OCI-LY7 (cell line): ENCODE measurements at regions of chr12 and their contacts with region 1.

Region 1: GRCh38 chr12:6890789-6891645 is 13.6 kb upstream of the LRRC23 start:
- DNase-seq: peak; percentile 98
- H3K4me3 ChIP-seq: peak overlapping the region; percentile 66
- H3K27ac ChIP-seq: peak overlapping the region; percentile 81
- H3K4me1 ChIP-seq: peaks cover 28% of the 10 kb centered on the region
- CTCF ChIP-seq: peak; percentile 82

Region 2: GRCh38 chr12:6792522-6793201 is 98.4 kb before region 1 on chr12:
- CTCF ChIA-PET with region 1: no interaction called
- POLR2A ChIA-PET with region 1: no interaction called
- intact Hi-C with region 1: no loop called
- DNase-seq: no peak
- H3K4me3 ChIP-seq: no peak overlapping the region
- H3K27ac ChIP-seq: no peak overlapping the region
- H3K4me1 ChIP-seq: peaks cover 17% of the 10 kb centered on the region
- CTCF ChIP-seq: no peak

Region 3: GRCh38 chr12:6861391-6861790 is 29.6 kb before region 1 on chr12:
- CTCF ChIA-PET with region 1: no interaction called
- POLR2A ChIA-PET with region 1: no interaction called
- intact Hi-C with region 1: no loop called
- DNase-seq: no peak
- H3K4me3 ChIP-seq: no peak overlapping the region
- H3K27ac ChIP-seq: no peak overlapping the region
- H3K4me1 ChIP-seq: peaks cover 2% of the 10 kb centered on the region
- CTCF ChIP-seq: no peak

Region 4: GRCh38 chr12:6904280-6905278 is 13.6 kb after region 1 on chr12 and contains the start of gene LRRC23:
- CTCF ChIA-PET with region 1: interaction called, 3 read pairs
- POLR2A ChIA-PET with region 1: interaction called, 13 read pairs
- intact Hi-C with region 1: no loop called
- DNase-seq: peak; percentile 95
- H3K4me3 ChIP-seq: peak within 1 kb of the TSS; percentile 81
- H3K27ac ChIP-seq: no peak within 1 kb of the TSS
- H3K4me1 ChIP-seq: peaks cover 18% of the 10 kb centered on the region
- CTCF ChIP-seq: no peak
- total RNA-seq, gene LRRC23: 15.7 and 17.7 TPM in 2 replicates

Region 5: GRCh38 chr12:6914246-6914946 is 23.4 kb after region 1 on chr12 and contains the start of gene ENO2:
- CTCF ChIA-PET with region 1: interaction called, 3 read pairs
- POLR2A ChIA-PET with region 1: interaction called, 5 read pairs
- intact Hi-C with region 1: loop called (anchors 1 kb)
- DNase-seq: peak; percentile 75
- H3K4me3 ChIP-seq: peak within 1 kb of the TSS; percentile 71
- H3K27ac ChIP-seq: peak within 1 kb of the TSS; percentile 4
- H3K4me1 ChIP-seq: peaks cover 34% of the 10 kb centered on the region
- CTCF ChIP-seq: no peak
- total RNA-seq, gene ENO2: 24.9 and 29.3 TPM in 2 replicates

Region 6: GRCh38 chr12:6937481-6938297 is 46.7 kb after region 1 on chr12:
- CTCF ChIA-PET with region 1: interaction called, 3 read pairs
- POLR2A ChIA-PET with region 1: no interaction called
- intact Hi-C with region 1: loop called (anchors 2 kb)
- DNase-seq: peak; percentile 98
- H3K4me3 ChIP-seq: peak overlapping the region; percentile 81
- H3K27ac ChIP-seq: peak overlapping the region; percentile 87
- H3K4me1 ChIP-seq: peaks cover 15% of the 10 kb centered on the region
- CTCF ChIP-seq: peak; percentile 93

Region 7: GRCh38 chr12:8554451-8555195 is 1663.6 kb after region 1 on chr12:
- CTCF ChIA-PET with region 1: no interaction called
- POLR2A ChIA-PET with region 1: no interaction called
- intact Hi-C with region 1: no loop called
- DNase-seq: no peak
- H3K4me3 ChIP-seq: no peak overlapping the region
- H3K27ac ChIP-seq: no peak overlapping the region
- H3K4me1 ChIP-seq: peaks cover 4% of the 10 kb centered on the region
- CTCF ChIP-seq: no peak